ENCODE measurements at regions of chr19 and their contacts with region 1.

Region 1: GRCh38 chr19:54266133-54266532 is 9.1 kb upstream of the LILRB5 start:
- DNase-seq: peak; percentile 98
- ATAC-seq: peak; percentile 99
- H3K4me3 Mint-ChIP-seq: no peak overlapping the region
- H3K27ac Mint-ChIP-seq: no peak overlapping the region
- H3K4me1 Mint-ChIP-seq: peaks cover 3% of the 10 kb centered on the region; the same call in 1 of the 2 replicates
- H3K27me3 Mint-ChIP-seq: peaks cover 36% of the 10 kb centered on the region
- CTCF ChIP-seq: peak; percentile 93

Region 2: GRCh38 chr19:54168174-54168917 is 97.8 kb before region 1 on chr19:
- CTCF ChIA-PET with region 1: interaction called, 12 read pairs
- POLR2A ChIA-PET with region 1: no interaction called
- DNase-seq: peak; percentile 99
- ATAC-seq: peak; percentile 46
- H3K4me3 Mint-ChIP-seq: no peak overlapping the region
- H3K27ac Mint-ChIP-seq: no peak overlapping the region
- H3K4me1 Mint-ChIP-seq: peaks cover 20% of the 10 kb centered on the region
- H3K27me3 Mint-ChIP-seq: peaks cover 32% of the 10 kb centered on the region
- CTCF ChIP-seq: peak; percentile 82

Region 3: GRCh38 chr19:54189735-54190502 is 76.2 kb before region 1 on chr19:
- CTCF ChIA-PET with region 1: interaction called, 48 read pairs
- POLR2A ChIA-PET with region 1: interaction called, 4 read pairs
- DNase-seq: peak; percentile 100
- ATAC-seq: peak; percentile 71
- H3K4me3 Mint-ChIP-seq: peak overlapping the region; percentile 85
- H3K27ac Mint-ChIP-seq: peak overlapping the region; percentile 100
- H3K4me1 Mint-ChIP-seq: peaks cover 35% of the 10 kb centered on the region
- H3K27me3 Mint-ChIP-seq: peaks cover 3% of the 10 kb centered on the region; the same call in 1 of the 2 replicates
- CTCF ChIP-seq: no peak

Region 4: GRCh38 chr19:54281007-54281728 is 15.0 kb after region 1 on chr19 and contains the start of gene LILRB2:
- CTCF ChIA-PET with region 1: interaction called, 17 read pairs
- POLR2A ChIA-PET with region 1: no interaction called
- DNase-seq: no peak
- ATAC-seq: no peak
- H3K4me3 Mint-ChIP-seq: no peak within 1 kb of the TSS
- H3K27ac Mint-ChIP-seq: no peak within 1 kb of the TSS
- H3K4me1 Mint-ChIP-seq: no peaks in the 10 kb centered on the region
- H3K27me3 Mint-ChIP-seq: peaks cover 11% of the 10 kb centered on the region
- CTCF ChIP-seq: no peak
- total RNA-seq, gene LILRB2: 0.11 TPM in 1 of 3 replicates, not detected in the others

Region 5: DNA sequence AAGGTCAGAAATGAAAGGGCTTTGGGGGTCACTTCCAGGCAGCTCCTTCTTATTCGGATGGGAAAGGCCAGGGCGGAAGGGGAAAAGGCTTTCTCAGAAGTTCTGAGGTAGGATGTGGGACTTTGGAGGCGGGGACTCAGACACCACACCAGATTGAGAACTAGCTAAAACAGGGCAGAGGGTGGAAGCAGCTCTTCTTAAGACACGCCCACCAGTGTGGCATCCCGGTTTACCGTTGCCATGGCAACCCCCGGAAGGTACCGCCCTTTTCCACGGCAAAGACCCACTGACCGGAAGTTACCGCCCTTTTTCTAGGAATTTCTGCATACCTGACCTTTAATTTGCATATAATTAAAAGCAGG is 50.6 kb after region 1 on chr19:
- CTCF ChIA-PET with region 1: interaction called, 36 read pairs
- POLR2A ChIA-PET with region 1: no interaction called
- DNase-seq: peak; percentile 86
- ATAC-seq: peak; percentile 91
- H3K4me3 Mint-ChIP-seq: no peak overlapping the region
- H3K27ac Mint-ChIP-seq: no peak overlapping the region
- H3K4me1 Mint-ChIP-seq: peaks cover 12% of the 10 kb centered on the region
- H3K27me3 Mint-ChIP-seq: peaks cover 21% of the 10 kb centered on the region
- CTCF ChIP-seq: no peak

Region 6: GRCh38 chr19:54390942-54391577 is 124.9 kb after region 1 on chr19:
- CTCF ChIA-PET with region 1: interaction called, 20 read pairs
- POLR2A ChIA-PET with region 1: no interaction called
- DNase-seq: peak; percentile 77
- ATAC-seq: peak; percentile 67
- H3K4me3 Mint-ChIP-seq: no peak overlapping the region
- H3K27ac Mint-ChIP-seq: peak overlapping the region; percentile 21; the same call in 1 of the 2 replicates
- H3K4me1 Mint-ChIP-seq: peaks cover 26% of the 10 kb centered on the region
- H3K27me3 Mint-ChIP-seq: peaks cover 43% of the 10 kb centered on the region
- CTCF ChIP-seq: peak; percentile 73

Region 7: GRCh38 chr19:54502518-54503048 is 236.4 kb after region 1 on chr19 and contains the start of gene LAIR2:
- CTCF ChIA-PET with region 1: no interaction called
- POLR2A ChIA-PET with region 1: no interaction called
- DNase-seq: no peak
- ATAC-seq: no peak
- H3K4me3 Mint-ChIP-seq: no peak within 1 kb of the TSS
- H3K27ac Mint-ChIP-seq: no peak within 1 kb of the TSS
- H3K4me1 Mint-ChIP-seq: no peaks in the 10 kb centered on the region
- H3K27me3 Mint-ChIP-seq: peaks cover 12% of the 10 kb centered on the region
- CTCF ChIP-seq: no peak
- total RNA-seq, gene LAIR2: not detected in 3 replicates